A549 (cell line): ENCODE measurements at regions of chr10 and their contacts with region 1.

Region 1: GRCh38 chr10:86366033-86366901 is at the start of gene GRID1:
- DNase-seq: no peak
- ATAC-seq: peak; percentile 28 to 46
- H3K4me3 ChIP-seq: peak within 1 kb of the TSS; percentile 60
- H3K27ac ChIP-seq: peak within 1 kb of the TSS; percentile 34 to 75; a peak in 5 of 6 replicates
- H3K4me1 ChIP-seq: peaks cover 12% of the 10 kb centered on the region
- CTCF ChIP-seq: no peak
- EP300 ChIP-seq: no peak
- POLR2A ChIP-seq: no peak
- RAD21 ChIP-seq: no peak
- polyA plus RNA-seq, gene GRID1: 0.30 and 0.49 TPM in 2 replicates

Region 2: DNA sequence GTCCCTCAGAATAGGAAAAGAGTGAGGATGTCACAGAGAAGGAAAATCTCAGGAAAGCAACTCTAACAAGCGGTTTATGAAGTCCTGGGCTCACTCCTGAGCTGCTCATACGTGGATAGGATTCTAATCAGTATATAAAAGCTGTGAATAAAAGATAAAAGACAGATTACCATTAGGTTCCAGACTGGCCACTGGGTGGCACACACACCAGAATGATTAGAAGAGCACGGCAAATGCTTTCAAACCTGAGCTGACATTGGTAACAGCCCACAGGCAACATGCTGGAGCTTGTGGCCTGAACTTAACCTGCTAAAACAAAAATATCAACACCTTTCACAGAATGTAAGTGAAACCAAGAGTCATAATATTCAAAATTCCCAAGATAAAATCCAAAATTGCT is 370.5 kb before region 1 on chr10:
- CTCF ChIA-PET with region 1: interaction called, 13 read pairs
- POLR2A ChIA-PET with region 1: no interaction called
- DNase-seq: peak; percentile 42 to 53
- ATAC-seq: peak; percentile 86 to 87
- H3K4me3 ChIP-seq: no peak overlapping the region
- H3K27ac ChIP-seq: no peak overlapping the region
- H3K4me1 ChIP-seq: no peaks in the 10 kb centered on the region
- CTCF ChIP-seq: peak; percentile 49
- EP300 ChIP-seq: no peak
- POLR2A ChIP-seq: no peak
- RAD21 ChIP-seq: peak; percentile 43 to 54; a peak in 3 of 5 replicates

Region 3: DNA sequence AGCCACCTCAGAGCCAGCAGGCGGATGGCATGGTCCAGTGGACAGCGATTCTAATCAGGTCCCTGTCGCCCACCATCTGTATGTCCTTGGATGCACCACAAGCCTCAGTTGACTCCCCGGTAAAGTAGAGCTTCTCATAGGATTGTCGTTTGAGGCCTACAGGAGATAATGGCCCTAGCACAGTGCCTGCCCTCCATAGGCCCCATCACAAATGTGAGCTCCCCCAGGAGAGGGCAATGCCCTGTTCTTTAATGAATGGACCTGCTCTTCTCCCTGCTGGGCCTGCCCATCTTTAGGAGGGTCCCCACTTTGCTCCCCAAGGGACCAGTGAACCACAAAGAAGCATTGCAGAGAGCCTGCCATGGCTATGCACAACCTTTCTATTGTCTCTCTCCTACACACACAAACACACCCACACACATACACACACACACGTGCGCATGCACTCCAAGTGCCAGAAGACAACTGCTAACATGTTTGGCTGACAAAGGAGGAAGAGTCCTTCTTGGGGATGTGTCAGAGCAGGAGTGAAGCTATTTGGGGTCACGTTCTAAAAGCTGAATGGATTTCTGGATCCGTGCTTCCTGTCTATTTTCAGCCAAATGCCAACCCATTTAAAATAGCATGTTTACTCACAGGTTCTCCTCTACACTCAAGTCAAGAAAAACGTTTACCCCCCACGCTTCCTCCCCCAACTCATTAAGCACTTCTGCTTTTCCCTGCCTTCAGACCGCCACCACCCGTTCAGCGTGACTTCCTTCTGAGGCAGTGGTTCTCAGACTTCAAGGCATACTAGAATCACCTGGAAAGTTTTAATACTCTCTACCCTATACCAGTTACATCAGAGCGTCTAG is 195.8 kb before region 1 on chr10:
- CTCF ChIA-PET with region 1: no interaction called
- POLR2A ChIA-PET with region 1: no interaction called
- DNase-seq: no peak
- ATAC-seq: no peak
- H3K4me3 ChIP-seq: no peak overlapping the region
- H3K27ac ChIP-seq: no peak overlapping the region
- H3K4me1 ChIP-seq: no peaks in the 10 kb centered on the region
- CTCF ChIP-seq: no peak
- EP300 ChIP-seq: no peak
- POLR2A ChIP-seq: no peak
- RAD21 ChIP-seq: no peak

Region 4: GRCh38 chr10:86261941-86262687 is 104.2 kb before region 1 on chr10:
- CTCF ChIA-PET with region 1: interaction called, 11 read pairs
- POLR2A ChIA-PET with region 1: no interaction called
- DNase-seq: peak; percentile 66 to 69
- ATAC-seq: peak; percentile 86 to 97
- H3K4me3 ChIP-seq: no peak overlapping the region
- H3K27ac ChIP-seq: no peak overlapping the region
- H3K4me1 ChIP-seq: no peaks in the 10 kb centered on the region
- CTCF ChIP-seq: peak; percentile 39
- EP300 ChIP-seq: no peak
- POLR2A ChIP-seq: no peak
- RAD21 ChIP-seq: peak; percentile 51 to 63; a peak in 4 of 5 replicates

Region 5: DNA sequence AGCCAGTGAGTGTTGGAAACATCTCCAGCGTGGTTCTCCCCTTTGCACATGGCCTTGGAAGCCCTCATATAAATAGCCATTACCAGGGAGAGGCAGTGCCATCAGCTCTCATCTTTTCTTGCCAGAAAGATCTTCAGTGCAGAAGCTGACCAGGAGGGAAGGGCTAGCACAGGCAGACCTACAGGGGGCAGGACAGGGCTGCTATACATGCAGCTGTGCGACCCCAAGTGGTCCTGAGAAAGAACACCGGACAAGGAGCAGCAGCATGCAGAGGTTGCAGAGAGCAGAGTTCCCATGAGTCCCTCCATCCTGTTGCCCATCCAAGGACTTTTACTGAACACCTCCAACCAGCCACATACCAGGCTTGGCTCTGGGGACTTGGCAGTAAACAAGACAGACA is 16.8 kb before region 1 on chr10:
- CTCF ChIA-PET with region 1: interaction called, 53 read pairs
- POLR2A ChIA-PET with region 1: interaction called, 3 read pairs
- DNase-seq: peak; percentile 52 to 64
- ATAC-seq: peak; percentile 30 to 80; a peak in 4 of 6 replicates
- H3K4me3 ChIP-seq: no peak overlapping the region
- H3K27ac ChIP-seq: no peak overlapping the region
- H3K4me1 ChIP-seq: peaks cover 27% of the 10 kb centered on the region
- CTCF ChIP-seq: peak; percentile 25; the same call in 2 of the 3 replicates
- EP300 ChIP-seq: no peak
- POLR2A ChIP-seq: no peak
- RAD21 ChIP-seq: peak in 1 of 2 experiments; percentile 39; a peak in 2 of 5 replicates

Region 6: GRCh38 chr10:86376852-86377796 is 10.9 kb after region 1 on chr10:
- CTCF ChIA-PET with region 1: interaction called, 24 read pairs
- POLR2A ChIA-PET with region 1: no interaction called
- DNase-seq: peak; percentile 71 to 75
- ATAC-seq: peak; percentile 90 to 98
- H3K4me3 ChIP-seq: no peak overlapping the region
- H3K27ac ChIP-seq: peak overlapping the region in 1 of 2 experiments; percentile 56; a peak in 2 of 6 replicates
- H3K4me1 ChIP-seq: no peaks in the 10 kb centered on the region
- CTCF ChIP-seq: peak; percentile 92
- EP300 ChIP-seq: no peak
- POLR2A ChIP-seq: no peak
- RAD21 ChIP-seq: peak; percentile 83 to 97